ENCODE measurements at regions of chr10 and their contacts with region 1.

Region 1: GRCh38 chr10:109929501-109930219 is 6.3 kb upstream of the XPNPEP1 start:
- DNase-seq: no peak
- ATAC-seq: peak; percentile 20

Region 2: GRCh38 chr10:109895848-109896247 is 33.8 kb before region 1 on chr10:
- intact Hi-C with region 1: loop called (anchors 2 kb)
- DNase-seq: no peak
- ATAC-seq: no peak

Measured in sciatic nerve (tissue), 2 donors.